ENCODE measurements at regions of chr2 and their contacts with region 1.

Region 1: GRCh38 chr2:43131024-43131889 is 95.1 kb downstream of the ZFP36L2 start:
- DNase-seq: peak; percentile 99
- H3K4me3 ChIP-seq: no peak overlapping the region
- H3K27ac ChIP-seq: peak overlapping the region; percentile 89
- H3K4me1 ChIP-seq: peaks cover 33% of the 10 kb centered on the region
- H3K27me3 ChIP-seq: no peaks in the 10 kb centered on the region
- CTCF ChIP-seq: peak; percentile 34 to 53

Region 2: DNA sequence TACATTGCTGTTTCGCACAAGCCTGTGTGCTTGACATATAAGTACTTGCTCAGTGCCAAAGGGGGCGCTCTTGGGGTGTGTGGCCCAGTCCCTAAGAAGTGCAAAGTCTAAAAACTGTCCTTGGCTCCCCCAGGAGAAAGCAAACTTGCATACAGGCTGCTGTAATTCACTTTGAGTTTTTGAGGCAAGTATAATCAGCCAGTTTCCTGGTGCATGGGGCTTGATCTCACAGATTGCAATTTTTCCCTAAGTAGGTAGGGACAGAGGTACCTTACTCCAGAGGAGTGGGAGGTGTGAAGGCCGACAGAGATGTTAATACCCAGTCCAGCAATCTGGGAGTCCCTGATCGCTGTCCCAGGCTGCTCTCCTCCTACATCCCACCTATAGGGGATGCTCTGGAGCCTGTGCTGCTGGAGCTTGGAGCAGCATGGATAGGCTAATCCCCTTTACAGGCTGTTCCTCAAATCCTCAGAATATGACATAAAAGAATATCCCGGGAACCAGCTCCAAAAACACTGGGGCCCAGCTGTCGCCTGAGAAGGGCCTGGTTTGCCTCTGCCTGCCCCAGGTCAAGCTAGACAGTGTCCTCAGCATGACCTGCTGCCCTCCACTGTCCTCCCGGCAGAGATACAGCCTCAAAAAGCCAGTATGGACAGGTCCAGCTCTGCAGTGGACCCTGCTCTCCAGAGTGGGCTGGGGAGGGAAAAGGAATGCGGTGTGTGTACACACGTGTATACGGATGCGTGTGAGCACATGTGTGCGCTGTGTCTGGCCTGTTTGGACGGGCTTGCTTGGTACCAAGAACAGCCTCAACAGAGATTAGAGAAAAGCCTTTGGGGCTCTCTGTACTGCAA is 202.3 kb before region 1 on chr2:
- CTCF ChIA-PET with region 1: interaction called, 12 read pairs
- dilution Hi-C with region 1: no loop called
- in situ Hi-C with region 1: no loop called
- intact Hi-C with region 1: no loop called
- DNase-seq: no peak
- H3K4me3 ChIP-seq: no peak overlapping the region
- H3K27ac ChIP-seq: no peak overlapping the region
- H3K4me1 ChIP-seq: peaks cover 37% of the 10 kb centered on the region
- H3K27me3 ChIP-seq: no peaks in the 10 kb centered on the region
- CTCF ChIP-seq: peak in 1 of 2 donors; percentile 47

Region 3: DNA sequence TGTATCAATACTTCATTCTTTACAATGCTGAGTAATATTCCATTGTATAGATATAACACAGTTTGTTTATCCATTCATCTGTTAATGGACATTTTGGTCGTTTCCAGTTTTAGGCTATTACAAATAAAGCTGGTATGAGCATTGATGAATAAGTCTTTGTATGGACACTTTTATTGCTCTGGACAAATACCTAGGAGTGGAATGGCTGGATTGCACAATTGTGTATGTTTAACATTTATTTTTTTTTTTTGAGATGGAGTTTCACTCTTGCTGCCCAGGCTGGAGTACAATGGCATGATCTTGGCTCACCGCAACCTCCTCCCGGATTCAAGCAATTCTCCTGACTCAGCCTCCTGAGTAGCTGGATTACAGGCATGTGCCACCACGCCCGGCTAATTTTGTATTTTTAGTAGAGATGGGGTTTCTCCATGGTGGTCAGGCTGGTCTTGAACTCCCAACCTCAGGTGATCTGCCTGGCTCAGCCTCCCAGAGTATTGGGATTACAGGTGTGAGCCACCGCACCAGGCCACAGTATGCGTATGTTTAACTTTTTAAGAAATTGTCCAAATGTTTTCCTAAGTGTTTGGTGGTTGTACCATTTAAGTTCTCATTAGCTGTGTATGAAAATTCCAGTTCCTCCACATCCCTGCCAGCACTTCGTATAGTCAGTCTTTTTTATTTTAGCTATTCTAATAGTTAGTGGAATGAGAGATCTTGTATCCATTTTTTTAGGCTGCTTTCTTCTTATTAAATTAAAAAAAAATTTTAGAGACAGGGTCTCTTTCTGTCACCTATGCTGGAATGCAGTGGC is 143.9 kb before region 1 on chr2:
- CTCF ChIA-PET with region 1: no interaction called
- dilution Hi-C with region 1: no loop called
- in situ Hi-C with region 1: no loop called
- intact Hi-C with region 1: loop called (anchors 1 kb)
- DNase-seq: peak; percentile 97
- H3K4me3 ChIP-seq: no peak overlapping the region
- H3K27ac ChIP-seq: peak overlapping the region; percentile 98
- H3K4me1 ChIP-seq: peaks cover 34% of the 10 kb centered on the region
- H3K27me3 ChIP-seq: no peaks in the 10 kb centered on the region
- CTCF ChIP-seq: no peak

Region 4: DNA sequence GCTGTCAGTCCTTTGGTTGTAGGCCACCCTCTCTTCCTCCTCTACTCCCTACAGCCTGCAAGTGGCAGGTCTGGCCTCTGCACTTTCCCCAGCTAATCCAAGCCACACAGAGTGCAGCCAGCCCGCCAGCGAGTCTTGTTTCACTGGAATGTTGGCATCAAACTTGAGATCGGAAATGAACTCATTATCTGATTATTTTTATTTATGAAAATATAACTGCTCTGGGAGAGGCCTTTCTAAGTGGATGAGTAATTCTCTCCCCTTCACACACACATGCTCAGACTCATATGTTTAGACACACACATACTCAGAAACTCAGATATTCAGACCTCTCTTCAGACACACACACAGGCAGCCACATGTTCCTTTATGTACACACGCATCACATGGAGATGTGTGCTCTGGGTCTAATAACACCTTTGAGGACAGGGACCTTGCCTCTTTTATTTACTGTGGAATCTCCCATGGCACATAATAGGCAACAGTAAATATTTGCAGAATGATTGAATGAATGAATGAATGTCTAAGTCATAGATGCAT is 56.1 kb before region 1 on chr2:
- CTCF ChIA-PET with region 1: no interaction called
- dilution Hi-C with region 1: no loop called
- in situ Hi-C with region 1: no loop called
- intact Hi-C with region 1: loop called (anchors 1 kb)
- DNase-seq: peak; percentile 96
- H3K4me3 ChIP-seq: no peak overlapping the region
- H3K27ac ChIP-seq: peak overlapping the region; percentile 90
- H3K4me1 ChIP-seq: peaks cover 34% of the 10 kb centered on the region
- H3K27me3 ChIP-seq: no peaks in the 10 kb centered on the region
- CTCF ChIP-seq: peak in 1 of 2 donors; percentile 25

Region 5: GRCh38 chr2:43226558-43226954 is 95.3 kb after region 1 on chr2 and contains the start of gene ZFP36L2:
- CTCF ChIA-PET with region 1: interaction called, 3 read pairs
- dilution Hi-C with region 1: no loop called
- in situ Hi-C with region 1: no loop called
- intact Hi-C with region 1: loop called (anchors 1 kb)
- DNase-seq: peak; percentile 95
- H3K4me3 ChIP-seq: peak within 1 kb of the TSS; percentile 83 to 88 (median 86)
- H3K27ac ChIP-seq: peak within 1 kb of the TSS; percentile 88
- H3K4me1 ChIP-seq: peaks cover 29% of the 10 kb centered on the region
- H3K27me3 ChIP-seq: no peaks in the 10 kb centered on the region
- CTCF ChIP-seq: no peak
- total RNA-seq, gene ZFP36L2: 26.3 to 213 TPM